ENCODE measurements at regions of chr18 and their contacts with region 1.

Region 1: DNA sequence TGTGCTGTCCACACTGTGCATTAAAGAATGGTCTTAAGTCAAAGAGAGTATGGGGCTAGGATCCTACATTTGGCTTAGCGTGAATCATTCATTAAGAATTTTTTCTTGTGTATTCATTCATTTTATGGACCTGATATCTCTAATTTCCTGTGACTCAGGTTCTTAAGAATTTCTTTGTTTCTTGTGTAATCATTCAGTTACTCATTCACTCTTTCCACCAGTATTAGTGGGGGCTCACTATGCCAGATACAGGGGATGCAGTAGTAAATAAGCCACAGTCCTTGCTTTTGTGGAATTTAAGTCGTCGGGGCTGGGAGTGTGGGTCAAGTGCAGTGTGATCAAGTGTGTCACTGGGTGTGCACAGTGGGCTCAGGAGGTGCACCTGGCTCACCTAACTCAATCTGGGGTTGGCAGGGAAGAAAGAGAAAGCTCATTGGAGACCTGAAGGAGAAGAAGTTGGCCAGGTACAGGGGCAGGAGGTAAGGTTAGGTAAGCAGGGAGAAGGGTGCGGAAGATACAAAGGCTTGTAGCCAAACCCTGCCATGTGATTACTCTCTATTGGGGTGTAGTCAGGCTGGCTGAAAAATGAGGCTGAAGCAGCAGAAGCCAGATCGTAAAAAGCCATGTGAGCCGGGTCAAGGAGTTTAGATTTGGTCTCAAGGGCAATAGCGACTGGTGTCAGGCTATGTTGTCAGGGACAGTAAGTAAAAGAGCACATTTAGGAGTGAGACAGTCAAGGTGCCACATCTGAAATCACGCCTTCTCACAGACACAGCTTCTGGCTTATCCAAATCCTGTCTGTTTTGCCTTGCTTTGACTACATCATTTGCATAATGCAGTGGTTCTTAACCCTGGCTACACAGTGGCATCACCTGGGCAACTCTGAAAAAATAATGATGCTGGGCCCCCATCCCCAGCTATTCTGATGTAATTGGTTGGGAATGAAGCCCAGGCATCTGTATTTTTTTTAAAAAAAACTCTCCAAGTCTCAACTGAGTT is 67.2 kb downstream of the KCTD1 start:
- DNase-seq: peak; percentile 77
- H3K4me3 Mint-ChIP-seq: peak overlapping the region; percentile 68
- H3K27ac Mint-ChIP-seq: peak overlapping the region; percentile 99
- H3K4me1 Mint-ChIP-seq: peaks cover 75% of the 10 kb centered on the region
- H3K27me3 Mint-ChIP-seq: no peaks in the 10 kb centered on the region
- CTCF ChIP-seq: no peak

Region 2: DNA sequence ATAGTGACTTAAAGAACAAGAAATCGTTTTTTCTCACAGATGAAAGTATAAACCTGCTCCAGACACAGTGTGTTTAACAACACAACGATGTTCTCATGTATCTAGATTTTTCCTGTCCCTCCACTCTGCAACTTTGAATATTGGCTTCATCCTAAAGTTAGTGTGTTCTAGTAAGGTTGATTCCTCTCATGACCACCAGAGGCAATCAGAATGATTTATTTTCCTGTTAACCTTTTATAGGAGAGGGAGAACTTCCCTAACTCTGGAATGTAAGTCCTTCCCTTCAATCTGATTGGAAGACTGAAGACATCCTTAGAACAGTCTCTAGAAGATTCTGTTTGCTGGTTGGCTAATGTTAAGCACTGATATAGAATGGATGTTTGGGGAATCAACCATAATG is 295.9 kb before region 1 on chr18:
- CTCF ChIA-PET with region 1: no interaction called
- intact Hi-C with region 1: no loop called
- DNase-seq: no peak
- H3K4me3 Mint-ChIP-seq: no peak overlapping the region
- H3K27ac Mint-ChIP-seq: no peak overlapping the region
- H3K4me1 Mint-ChIP-seq: no peaks in the 10 kb centered on the region
- H3K27me3 Mint-ChIP-seq: no peaks in the 10 kb centered on the region
- CTCF ChIP-seq: no peak

Region 3: DNA sequence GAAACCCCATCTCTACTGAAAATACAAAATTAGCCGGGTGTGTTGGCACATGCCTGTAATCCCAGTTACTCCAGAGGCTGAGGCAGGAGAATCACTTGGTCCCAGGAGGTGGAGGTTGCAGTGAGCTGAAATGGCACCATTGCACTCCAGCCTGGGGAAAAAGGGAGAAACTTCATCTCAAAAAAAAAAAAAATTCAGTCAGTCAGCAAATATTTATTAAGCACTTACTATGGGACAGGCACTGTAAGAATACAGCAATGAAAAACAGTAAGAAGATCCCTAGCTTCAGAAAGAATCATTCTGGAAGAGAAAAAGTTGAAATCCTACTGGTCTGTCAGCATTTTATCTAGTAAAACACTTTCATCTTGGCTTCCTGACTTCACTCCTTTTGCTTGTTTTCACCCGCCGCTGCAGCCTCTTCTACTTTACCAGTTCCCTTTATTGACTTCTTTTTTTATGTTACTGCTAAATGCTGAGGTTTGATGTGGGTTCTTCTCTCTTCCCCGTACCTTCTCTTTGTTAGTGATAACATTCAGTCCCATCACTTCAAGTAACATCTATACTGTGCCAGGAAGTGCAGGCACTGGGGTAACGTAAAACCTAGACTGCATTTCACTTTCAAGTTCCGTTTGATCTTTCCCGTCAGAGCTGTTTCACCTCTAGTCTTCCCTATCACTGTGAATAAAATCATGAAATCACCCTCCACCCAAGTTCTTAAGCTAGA is 265.8 kb before region 1 on chr18:
- CTCF ChIA-PET with region 1: no interaction called
- intact Hi-C with region 1: no loop called
- DNase-seq: no peak
- H3K4me3 Mint-ChIP-seq: no peak overlapping the region
- H3K27ac Mint-ChIP-seq: no peak overlapping the region
- H3K4me1 Mint-ChIP-seq: no peaks in the 10 kb centered on the region
- H3K27me3 Mint-ChIP-seq: peaks cover 10% of the 10 kb centered on the region
- CTCF ChIP-seq: no peak

Region 4: DNA sequence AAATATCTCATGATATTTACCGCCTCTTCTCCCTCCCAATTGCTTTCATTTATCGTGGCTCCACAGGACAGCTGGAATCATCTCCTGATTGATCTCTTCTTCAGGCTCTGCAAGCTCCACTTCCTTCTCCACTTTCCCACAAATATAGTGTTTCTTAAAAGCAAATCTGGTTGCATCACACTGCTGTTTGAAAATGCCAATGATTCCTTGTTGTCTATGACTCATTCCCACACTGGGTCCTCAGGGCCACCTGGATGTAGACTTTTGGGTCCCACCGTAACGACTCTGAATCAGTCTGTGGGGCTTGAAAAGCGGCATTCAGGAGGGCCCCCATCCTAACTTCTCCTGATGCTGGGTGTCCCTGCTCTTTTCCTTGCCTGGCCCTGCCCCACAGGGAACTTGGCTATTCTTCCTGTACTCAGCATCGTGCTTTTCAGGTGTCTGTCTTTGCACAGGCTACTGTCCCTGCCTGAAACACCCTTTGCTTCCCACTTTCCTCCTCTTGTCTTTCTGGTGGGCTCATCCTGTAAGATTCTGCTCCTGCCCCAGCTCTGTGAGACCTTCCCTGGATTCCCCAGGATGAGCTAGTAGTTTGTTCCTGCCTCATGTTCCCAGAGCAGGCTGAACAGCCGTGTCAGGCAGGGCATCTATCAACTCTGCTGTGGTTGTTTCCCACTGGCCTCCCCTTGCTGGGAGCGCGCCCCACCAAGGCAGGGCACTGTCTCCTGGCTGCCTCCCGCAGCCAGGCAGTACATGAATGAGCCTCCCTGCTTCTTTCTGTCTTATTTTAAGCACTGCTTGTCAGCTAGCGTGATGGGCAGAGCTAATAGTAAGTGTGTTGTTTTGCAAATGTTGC is 44.8 kb before region 1 on chr18:
- CTCF ChIA-PET with region 1: interaction called, 5 read pairs
- intact Hi-C with region 1: loop called (anchors 2 kb)
- DNase-seq: peak; percentile 50
- H3K4me3 Mint-ChIP-seq: peak overlapping the region; percentile 3
- H3K27ac Mint-ChIP-seq: peak overlapping the region; percentile 77
- H3K4me1 Mint-ChIP-seq: peaks cover 32% of the 10 kb centered on the region
- H3K27me3 Mint-ChIP-seq: no peaks in the 10 kb centered on the region
- CTCF ChIP-seq: no peak

Region 5: DNA sequence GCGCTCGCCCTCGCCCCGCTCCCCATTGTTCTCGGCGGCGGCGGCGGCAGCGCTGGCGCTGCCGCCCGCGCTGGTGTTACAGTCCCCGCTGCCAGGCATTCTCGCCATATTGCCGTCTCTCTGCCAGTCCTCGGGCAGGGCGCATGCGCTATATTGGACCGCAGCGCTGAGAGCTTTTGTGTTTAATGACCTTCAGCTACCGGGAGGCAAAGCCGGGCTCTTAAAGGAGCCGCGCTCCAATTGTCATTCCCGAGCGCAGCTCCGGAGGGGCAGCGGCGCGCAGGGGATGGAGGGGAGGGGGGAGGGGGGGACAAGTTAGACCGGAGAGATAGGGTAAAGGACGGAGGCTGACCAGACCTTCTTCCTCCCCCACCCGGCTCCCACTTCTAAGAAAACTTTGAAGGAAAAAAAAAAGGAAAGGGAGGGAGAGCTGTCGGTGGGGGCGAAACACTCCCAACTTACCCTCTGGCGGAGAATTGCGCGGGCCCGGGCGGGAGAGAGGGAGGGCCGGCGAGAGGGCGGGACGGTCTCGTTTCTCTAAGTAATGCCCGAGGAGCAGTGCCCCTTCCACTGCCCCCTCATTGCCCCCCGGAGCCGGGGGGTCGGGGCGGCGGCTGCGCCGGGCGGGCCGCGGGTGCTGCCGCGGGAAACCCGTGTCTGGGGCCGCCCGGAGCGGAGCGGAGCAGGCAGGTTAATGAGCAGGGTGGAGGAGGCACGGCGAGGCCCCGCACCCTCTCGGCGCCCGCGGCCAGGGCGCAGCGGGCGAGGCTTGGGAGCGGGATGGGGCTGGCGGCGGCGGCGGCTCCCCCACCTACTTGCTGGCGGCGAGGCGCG is 67.5 kb after region 1 on chr18 and contains the start of gene KCTD1:
- CTCF ChIA-PET with region 1: interaction called, 21 read pairs
- intact Hi-C with region 1: loop called (anchors 2 kb)
- DNase-seq: peak; percentile 73
- H3K4me3 Mint-ChIP-seq: peak within 1 kb of the TSS; percentile 80
- H3K27ac Mint-ChIP-seq: peak within 1 kb of the TSS; percentile 67
- H3K4me1 Mint-ChIP-seq: peaks cover 32% of the 10 kb centered on the region
- H3K27me3 Mint-ChIP-seq: no peaks in the 10 kb centered on the region
- CTCF ChIP-seq: no peak
- total RNA-seq, gene KCTD1: 54.1 and 63.2 TPM in 2 replicates